GM18951 (cell line): ENCODE measurements at regions of chr3 and their contacts with region 1.

Region 1: GRCh38 chr3:159252772-159253384 is 451.0 kb downstream of the MFSD1 start:
- POLR2A ChIP-seq: no peak

Region 2: DNA sequence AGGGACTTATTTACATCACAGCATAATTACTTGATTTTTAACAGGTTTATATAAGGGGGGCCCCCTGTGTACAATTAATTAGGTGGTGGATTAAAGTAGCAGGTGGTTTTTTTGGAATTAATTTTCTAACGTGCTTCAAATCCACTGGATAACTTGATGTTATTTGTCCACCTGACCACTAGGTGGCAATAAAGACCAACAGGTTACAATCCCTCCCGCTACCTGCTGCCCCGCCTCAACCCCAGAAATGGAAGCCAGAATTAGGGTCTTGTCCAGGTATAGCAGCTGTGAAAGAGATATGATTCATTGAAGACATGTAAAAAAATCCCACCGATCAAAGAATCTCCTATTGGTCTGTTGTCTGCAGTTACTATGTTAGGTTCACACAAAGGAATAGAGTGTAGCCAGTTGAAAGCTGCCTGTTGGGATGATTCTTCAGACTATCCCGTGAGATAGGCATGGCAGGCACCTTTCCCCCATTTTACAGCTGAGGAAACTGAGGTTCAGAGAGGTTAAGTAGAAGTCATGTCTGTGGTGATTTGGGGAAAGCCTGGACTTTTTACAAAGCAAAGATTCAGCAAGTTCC is 407.0 kb before region 1 on chr3:
- in situ Hi-C with region 1: loop called (anchors 10 kb)
- POLR2A ChIP-seq: no peak

Region 3: GRCh38 chr3:159130108-159130507 is 122.8 kb before region 1 on chr3:
- in situ Hi-C with region 1: loop called (anchors 10 kb)
- POLR2A ChIP-seq: no peak

Region 4: GRCh38 chr3:159356606-159357005 is 103.7 kb after region 1 on chr3:
- in situ Hi-C with region 1: no loop called
- POLR2A ChIP-seq: no peak